ENCODE measurements at regions of chr1 and their contacts with region 1.

Region 1: DNA sequence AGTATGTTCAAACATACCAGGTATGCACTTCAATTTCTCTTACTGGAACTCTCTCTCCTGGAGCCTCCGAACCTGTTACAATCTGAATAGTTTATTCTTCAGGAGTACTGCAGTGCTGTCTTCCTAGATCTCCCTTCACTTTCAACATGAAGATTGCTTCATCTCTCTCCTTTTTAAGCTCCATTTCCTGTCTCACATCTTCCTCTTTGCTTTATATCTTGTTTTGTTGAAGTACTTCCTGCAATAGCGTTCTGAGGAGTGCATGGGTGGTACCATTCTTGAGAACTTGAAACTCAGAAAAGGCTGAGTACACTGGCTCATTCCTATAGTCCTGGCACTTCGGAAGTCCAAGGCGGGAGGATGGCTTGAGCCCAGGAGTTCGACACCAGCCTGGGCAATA is 15.7 kb upstream of the C1orf146 start:
- DNase-seq: peak in 6 of 9 donors; percentile 13 to 38 (median 32)
- ATAC-seq: peak; percentile 24
- H3K4me3 ChIP-seq: no peak overlapping the region
- H3K4me3 Mint-ChIP-seq: peak overlapping the region in 9 of 10 donors; percentile 6 to 79 (median 44)
- H3K27ac ChIP-seq: peak overlapping the region; percentile 49
- H3K27ac Mint-ChIP-seq: peak overlapping the region; percentile 66 to 86 (median 78)
- H3K4me1 ChIP-seq: peaks cover 0 to 10% of the 10 kb centered on the region in 2 donors
- H3K4me1 Mint-ChIP-seq: peaks cover 9 to 29% (median 22%) of the 10 kb centered on the region in 7 donors
- H3K27me3 ChIP-seq: no peaks in the 10 kb centered on the region
- H3K27me3 Mint-ChIP-seq: no peaks in the 10 kb centered on the region

Region 2: DNA sequence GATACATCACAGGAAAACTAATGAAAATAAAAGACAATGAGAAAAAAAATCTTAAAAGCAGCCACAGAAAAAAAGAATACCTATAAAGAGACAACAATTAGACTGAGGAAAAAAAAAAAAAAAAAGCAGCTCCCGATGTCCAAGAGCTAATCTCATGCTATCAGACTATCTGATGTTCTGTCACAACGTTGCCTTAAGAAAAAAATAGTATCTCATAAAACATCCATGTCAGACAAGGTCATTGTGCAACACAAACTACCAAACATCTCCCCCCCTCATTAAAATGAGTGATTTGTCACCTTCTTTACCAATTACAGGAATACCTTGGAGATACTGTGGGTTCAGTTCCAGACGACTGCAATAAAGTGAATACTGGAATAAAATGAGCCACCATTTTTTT is 1249.1 kb before region 1 on chr1:
- CTCF ChIA-PET with region 1: no interaction called
- POLR2A ChIA-PET with region 1: no interaction called
- intact Hi-C with region 1: no loop called
- DNase-seq: no peak
- ATAC-seq: no peak
- H3K4me3 ChIP-seq: no peak overlapping the region
- H3K4me3 Mint-ChIP-seq: peak overlapping the region in 5 of 10 donors; percentile 19 to 61 (median 33)
- H3K27ac ChIP-seq: no peak overlapping the region
- H3K27ac Mint-ChIP-seq: peak overlapping the region in 1 of 9 donors; percentile 25
- H3K4me1 ChIP-seq: peaks cover 0 to 9% of the 10 kb centered on the region in 2 donors
- H3K4me1 Mint-ChIP-seq: peaks cover 32 to 90% (median 83%) of the 10 kb centered on the region in 7 donors
- H3K27me3 ChIP-seq: no peaks in the 10 kb centered on the region
- H3K27me3 Mint-ChIP-seq: no peaks in the 10 kb centered on the region

Region 3: DNA sequence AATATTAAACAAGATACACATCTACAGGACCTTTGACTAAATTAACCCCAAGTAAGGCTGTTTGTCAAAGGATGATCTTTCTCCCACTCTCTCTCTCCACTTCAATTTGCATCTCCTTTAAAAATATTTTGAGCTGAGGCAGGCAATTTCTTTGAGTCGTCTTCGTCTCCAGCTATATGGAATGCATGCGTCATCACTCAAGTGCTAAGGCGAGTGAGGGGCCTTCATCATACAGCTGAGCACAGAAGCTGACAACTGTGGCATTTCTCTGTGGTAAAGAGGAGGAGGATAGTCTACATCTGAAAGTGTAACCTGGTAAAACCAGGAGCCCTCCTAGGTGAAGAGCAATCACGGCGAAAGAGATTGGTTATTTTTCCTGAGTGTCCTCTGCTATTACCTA is 164.6 kb before region 1 on chr1:
- CTCF ChIA-PET with region 1: interaction called, 10 read pairs
- POLR2A ChIA-PET with region 1: no interaction called
- intact Hi-C with region 1: no loop called
- DNase-seq: no peak
- ATAC-seq: no peak
- H3K4me3 ChIP-seq: no peak overlapping the region
- H3K4me3 Mint-ChIP-seq: no peak overlapping the region
- H3K27ac ChIP-seq: no peak overlapping the region
- H3K27ac Mint-ChIP-seq: no peak overlapping the region
- H3K4me1 ChIP-seq: no peaks in the 10 kb centered on the region
- H3K4me1 Mint-ChIP-seq: no peaks in the 10 kb centered on the region
- H3K27me3 ChIP-seq: no peaks in the 10 kb centered on the region
- H3K27me3 Mint-ChIP-seq: peaks cover 3 to 10% (median 6%) of the 10 kb centered on the region in 5 donors

Region 4: GRCh38 chr1:92070892-92071291 is 131.1 kb before region 1 on chr1:
- CTCF ChIA-PET with region 1: no interaction called
- POLR2A ChIA-PET with region 1: no interaction called
- intact Hi-C with region 1: no loop called
- DNase-seq: no peak
- ATAC-seq: no peak
- H3K4me3 ChIP-seq: no peak overlapping the region
- H3K4me3 Mint-ChIP-seq: no peak overlapping the region
- H3K27ac ChIP-seq: no peak overlapping the region
- H3K27ac Mint-ChIP-seq: no peak overlapping the region
- H3K4me1 ChIP-seq: no peaks in the 10 kb centered on the region
- H3K4me1 Mint-ChIP-seq: peaks cover 0 to 2% (median 0%) of the 10 kb centered on the region in 7 donors
- H3K27me3 ChIP-seq: no peaks in the 10 kb centered on the region
- H3K27me3 Mint-ChIP-seq: peaks cover 0 to 10% (median 0%) of the 10 kb centered on the region in 5 donors

Region 5: DNA sequence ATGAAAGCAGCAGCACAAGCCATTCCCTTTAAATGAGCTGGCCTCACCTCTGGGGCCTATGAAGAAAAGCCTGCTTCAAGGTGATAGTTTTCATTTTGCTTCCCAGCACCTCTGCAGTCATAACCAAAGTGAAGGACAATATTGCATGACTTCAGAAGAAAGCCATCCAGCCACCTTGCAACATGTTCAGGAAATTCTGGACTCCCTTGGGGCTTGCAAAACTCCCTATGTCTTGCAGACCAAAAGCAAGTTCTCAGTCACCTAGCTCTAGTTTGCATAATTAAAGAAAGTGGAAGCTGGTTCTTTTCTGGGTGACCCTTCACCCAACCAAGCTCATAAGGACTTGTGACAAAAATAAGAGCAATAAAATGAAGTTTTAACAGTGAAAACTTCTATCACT is 197.1 kb after region 1 on chr1:
- CTCF ChIA-PET with region 1: no interaction called
- POLR2A ChIA-PET with region 1: no interaction called
- intact Hi-C with region 1: no loop called
- DNase-seq: no peak
- ATAC-seq: no peak
- H3K4me3 ChIP-seq: no peak overlapping the region
- H3K4me3 Mint-ChIP-seq: no peak overlapping the region
- H3K27ac ChIP-seq: no peak overlapping the region
- H3K27ac Mint-ChIP-seq: peak overlapping the region in 2 of 9 donors; percentile 13 to 47
- H3K4me1 ChIP-seq: no peaks in the 10 kb centered on the region
- H3K4me1 Mint-ChIP-seq: peaks cover 0 to 6% (median 0%) of the 10 kb centered on the region in 7 donors
- H3K27me3 ChIP-seq: no peaks in the 10 kb centered on the region
- H3K27me3 Mint-ChIP-seq: no peaks in the 10 kb centered on the region

Region 6: GRCh38 chr1:92749024-92749634 is 547.2 kb after region 1 on chr1:
- CTCF ChIA-PET with region 1: no interaction called
- POLR2A ChIA-PET with region 1: no interaction called
- intact Hi-C with region 1: no loop called
- DNase-seq: peak in 7 of 9 donors; percentile 12 to 53 (median 41)
- ATAC-seq: peak; percentile 75
- H3K4me3 ChIP-seq: no peak overlapping the region
- H3K4me3 Mint-ChIP-seq: no peak overlapping the region
- H3K27ac ChIP-seq: no peak overlapping the region
- H3K27ac Mint-ChIP-seq: no peak overlapping the region
- H3K4me1 ChIP-seq: no peaks in the 10 kb centered on the region
- H3K4me1 Mint-ChIP-seq: peaks cover 0 to 5% (median 0%) of the 10 kb centered on the region in 7 donors
- H3K27me3 ChIP-seq: no peaks in the 10 kb centered on the region
- H3K27me3 Mint-ChIP-seq: peaks cover 0 to 7% (median 0%) of the 10 kb centered on the region in 5 donors

Measured in naive thymus-derived CD4-positive, alpha-beta T cell (primary cell).